Heart left ventricle (tissue), 16 donors: ENCODE measurements at regions of chr2 and their contacts with region 1.

Region 1: DNA sequence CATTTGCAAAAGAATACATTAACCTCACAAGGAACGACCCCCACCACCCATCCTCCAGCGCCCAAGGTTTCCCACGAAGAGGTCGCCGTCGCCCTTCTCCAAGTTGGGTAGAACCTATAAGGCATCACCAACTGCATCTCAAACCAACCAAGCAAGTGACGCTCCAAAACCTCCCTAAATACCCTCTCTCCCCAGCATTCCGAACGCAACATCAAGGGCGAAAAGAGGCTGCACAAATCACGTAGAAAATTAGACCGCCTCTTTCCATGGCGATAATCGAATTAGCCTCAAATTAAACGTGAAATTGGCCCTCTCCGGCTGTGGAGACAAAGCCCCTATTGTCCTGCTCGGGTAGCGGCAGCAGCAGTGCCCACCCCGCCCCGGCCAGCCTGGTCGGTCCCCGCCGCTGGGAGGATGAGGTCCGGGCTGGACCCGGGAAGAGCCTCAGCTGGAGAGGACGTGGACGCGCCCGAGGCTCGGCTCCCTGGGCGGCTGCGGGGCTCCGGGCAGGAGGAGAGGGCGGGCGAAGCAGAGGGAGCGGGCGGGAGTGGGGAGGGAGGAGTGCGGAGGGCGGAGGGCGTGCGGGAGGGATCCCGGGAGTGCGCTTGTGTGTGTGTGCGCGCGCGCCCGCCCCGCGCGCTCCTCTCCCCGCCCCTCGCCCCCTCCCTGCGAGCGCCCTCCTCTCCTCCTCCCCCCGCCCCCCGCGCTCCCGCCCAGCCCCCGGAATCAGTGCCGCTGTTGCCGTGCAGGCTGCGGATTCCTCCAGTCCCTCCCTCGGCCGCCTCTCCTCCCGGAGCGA is at the start of gene SPTBN1:
- DNase-seq: peak; percentile 94 to 95 (median 95)
- ATAC-seq: peak; percentile 91 to 94 (median 94)
- H3K4me3 ChIP-seq: peak within 1 kb of the TSS; percentile 72 to 98 (median 84)
- H3K27ac ChIP-seq: peak within 1 kb of the TSS; percentile 92 to 99 (median 97)
- H3K4me1 ChIP-seq: peaks cover 7 to 43% (median 30%) of the 10 kb centered on the region in 12 donors
- H3K27me3 ChIP-seq: peaks cover 0 to 39% (median 0%) of the 10 kb centered on the region in 9 donors
- CTCF ChIP-seq: peak in 3 of 12 donors; percentile 6 to 20 (median 15)
- POLR2A ChIP-seq: peak in 1 of 2 donors; percentile 63
- total RNA-seq, gene SPTBN1: 378 to 659 (median 424) TPM

Region 2: DNA sequence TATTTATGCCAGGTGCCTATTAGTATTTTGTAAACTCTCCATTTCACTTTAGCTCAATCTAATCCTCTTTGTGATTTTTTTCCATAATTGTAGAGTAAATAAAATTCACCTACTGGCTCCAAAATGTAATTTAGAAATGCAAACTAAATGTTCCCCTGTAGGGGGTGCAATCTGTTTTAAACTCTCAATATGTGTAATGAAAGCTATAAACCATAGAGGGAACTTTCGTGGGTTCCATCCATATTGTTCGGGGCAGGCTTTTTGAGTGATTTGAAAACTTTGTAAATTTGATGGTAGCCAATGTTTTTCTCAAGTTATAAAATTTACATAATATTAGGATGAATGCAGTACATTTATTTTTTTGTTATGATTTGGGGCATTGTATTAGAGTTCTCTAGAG is 249.2 kb before region 1 on chr2:
- intact Hi-C with region 1: loop called in 3 of 10 experiments (anchors 2 to 10 kb)
- DNase-seq: no peak
- ATAC-seq: peak in 2 of 4 donors; percentile 49
- H3K4me3 ChIP-seq: no peak overlapping the region
- H3K27ac ChIP-seq: no peak overlapping the region
- H3K4me1 ChIP-seq: peaks cover 0 to 38% (median 25%) of the 10 kb centered on the region in 12 donors
- H3K27me3 ChIP-seq: no peaks in the 10 kb centered on the region
- CTCF ChIP-seq: peak; percentile 47 to 81 (median 68)
- POLR2A ChIP-seq: no peak

Region 3: GRCh38 chr2:54341656-54342055 is 114.1 kb before region 1 on chr2:
- intact Hi-C with region 1: loop called in 5 of 10 experiments (anchors 5 kb)
- DNase-seq: no peak
- ATAC-seq: peak; percentile 47 to 75 (median 68)
- H3K4me3 ChIP-seq: no peak overlapping the region
- H3K27ac ChIP-seq: peak overlapping the region in 2 of 12 donors; percentile 20 to 26
- H3K4me1 ChIP-seq: peaks cover 0 to 34% (median 10%) of the 10 kb centered on the region in 12 donors
- H3K27me3 ChIP-seq: no peaks in the 10 kb centered on the region
- CTCF ChIP-seq: peak in 8 of 12 donors; percentile 21 to 63 (median 42)
- POLR2A ChIP-seq: no peak

Region 4: GRCh38 chr2:54360055-54360792 is 95.5 kb before region 1 on chr2:
- intact Hi-C with region 1: loop called in 7 of 10 experiments (anchors 5 to 10 kb)
- DNase-seq: peak in 4 of 5 donors; percentile 66 to 73 (median 68)
- ATAC-seq: peak; percentile 91 to 97 (median 95)
- H3K4me3 ChIP-seq: peak overlapping the region in 8 of 12 donors; percentile 12 to 32 (median 20)
- H3K27ac ChIP-seq: peak overlapping the region; percentile 57 to 83 (median 75)
- H3K4me1 ChIP-seq: peaks cover 0 to 32% (median 20%) of the 10 kb centered on the region in 12 donors
- H3K27me3 ChIP-seq: no peaks in the 10 kb centered on the region
- CTCF ChIP-seq: no peak
- POLR2A ChIP-seq: no peak

Region 5: GRCh38 chr2:54422072-54422581 is 33.6 kb before region 1 on chr2:
- intact Hi-C with region 1: loop called in 4 of 10 experiments (anchors 5 kb)
- DNase-seq: no peak
- ATAC-seq: no peak
- H3K4me3 ChIP-seq: no peak overlapping the region
- H3K27ac ChIP-seq: peak overlapping the region in 2 of 12 donors; percentile 15 to 28
- H3K4me1 ChIP-seq: peaks cover 0 to 68% (median 46%) of the 10 kb centered on the region in 12 donors
- H3K27me3 ChIP-seq: no peaks in the 10 kb centered on the region
- CTCF ChIP-seq: no peak
- POLR2A ChIP-seq: no peak

Region 6: GRCh38 chr2:54432251-54433015 is 23.3 kb before region 1 on chr2:
- intact Hi-C with region 1: no loop called
- DNase-seq: no peak
- ATAC-seq: peak in 1 of 4 donors; percentile 10
- H3K4me3 ChIP-seq: no peak overlapping the region
- H3K27ac ChIP-seq: peak overlapping the region in 11 of 12 donors; percentile 48 to 94 (median 83)
- H3K4me1 ChIP-seq: peaks cover 0 to 97% (median 77%) of the 10 kb centered on the region in 12 donors
- H3K27me3 ChIP-seq: no peaks in the 10 kb centered on the region
- CTCF ChIP-seq: no peak
- POLR2A ChIP-seq: no peak

Region 7: GRCh38 chr2:54570925-54571694 is 115.3 kb after region 1 on chr2:
- intact Hi-C with region 1: loop called in 1 of 10 experiments (anchors 5 kb)
- DNase-seq: peak in 4 of 5 donors; percentile 56 to 64 (median 60)
- ATAC-seq: peak; percentile 40 to 63 (median 54)
- H3K4me3 ChIP-seq: no peak overlapping the region
- H3K27ac ChIP-seq: peak overlapping the region in 11 of 12 donors; percentile 18 to 91 (median 72)
- H3K4me1 ChIP-seq: peaks cover 46 to 95% (median 83%) of the 10 kb centered on the region in 12 donors
- H3K27me3 ChIP-seq: no peaks in the 10 kb centered on the region
- CTCF ChIP-seq: no peak
- POLR2A ChIP-seq: no peak

Region 8: GRCh38 chr2:54665436-54665856 is 209.7 kb after region 1 on chr2:
- intact Hi-C with region 1: loop called in 1 of 10 experiments (anchors 1 kb)
- DNase-seq: no peak
- ATAC-seq: peak in 3 of 4 donors; percentile 23 to 34 (median 31)
- H3K4me3 ChIP-seq: no peak overlapping the region
- H3K27ac ChIP-seq: peak overlapping the region; percentile 77 to 96 (median 84)
- H3K4me1 ChIP-seq: peaks cover 20 to 63% (median 48%) of the 10 kb centered on the region in 12 donors
- H3K27me3 ChIP-seq: no peaks in the 10 kb centered on the region
- CTCF ChIP-seq: peak; percentile 35 to 70 (median 60)
- POLR2A ChIP-seq: no peak